Common myeloid progenitor, CD34-positive (primary cell): ENCODE measurements at regions of chr10 and their contacts with region 1.

Region 1: DNA sequence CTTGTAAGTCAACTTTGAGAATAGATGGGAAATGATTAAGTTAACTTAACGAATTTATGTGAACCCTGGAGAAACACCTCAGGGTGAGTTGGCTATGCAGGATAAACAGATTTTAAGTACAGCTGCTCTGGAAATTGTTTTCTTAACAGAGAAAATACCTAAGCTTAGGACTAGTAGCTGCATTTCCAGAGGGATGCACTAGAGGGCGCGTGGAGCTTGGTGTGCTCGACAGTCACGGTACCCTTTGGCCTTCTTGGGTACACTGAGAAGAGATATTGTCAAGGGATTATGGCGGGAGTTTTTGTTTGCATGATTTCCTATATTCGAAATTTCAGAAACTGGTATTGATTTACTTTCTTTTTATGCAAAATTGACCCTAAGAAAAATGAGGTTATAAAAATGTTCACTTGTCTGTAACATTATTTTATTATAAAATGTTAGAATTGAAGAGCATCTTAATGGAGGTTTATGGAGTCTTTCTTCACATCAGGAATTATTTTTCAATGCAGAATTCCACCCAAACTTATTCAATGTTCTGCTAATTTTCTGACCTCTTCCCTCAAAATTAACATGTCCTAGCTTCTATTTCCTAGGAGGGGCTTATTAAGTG is 58.4 kb upstream of the MYO3A start:
- DNase-seq: peak; percentile 48 to 76 (median 66)
- H3K4me3 ChIP-seq: no peak overlapping the region
- H3K27ac ChIP-seq: no peak overlapping the region
- H3K4me1 ChIP-seq: no peaks in the 10 kb centered on the region
- H3K27me3 ChIP-seq: peaks cover 0 to 8% (median 1%) of the 10 kb centered on the region in 5 experiments

Region 2: GRCh38 chr10:25858076-25858475 is 17.6 kb before region 1 on chr10:
- CTCF ChIA-PET with region 1: interaction called, 11 read pairs
- POLR2A ChIA-PET with region 1: no interaction called
- DNase-seq: no peak
- H3K4me3 ChIP-seq: no peak overlapping the region
- H3K27ac ChIP-seq: no peak overlapping the region
- H3K4me1 ChIP-seq: no peaks in the 10 kb centered on the region
- H3K27me3 ChIP-seq: peaks cover 0 to 5% (median 0%) of the 10 kb centered on the region in 5 experiments

Region 3: DNA sequence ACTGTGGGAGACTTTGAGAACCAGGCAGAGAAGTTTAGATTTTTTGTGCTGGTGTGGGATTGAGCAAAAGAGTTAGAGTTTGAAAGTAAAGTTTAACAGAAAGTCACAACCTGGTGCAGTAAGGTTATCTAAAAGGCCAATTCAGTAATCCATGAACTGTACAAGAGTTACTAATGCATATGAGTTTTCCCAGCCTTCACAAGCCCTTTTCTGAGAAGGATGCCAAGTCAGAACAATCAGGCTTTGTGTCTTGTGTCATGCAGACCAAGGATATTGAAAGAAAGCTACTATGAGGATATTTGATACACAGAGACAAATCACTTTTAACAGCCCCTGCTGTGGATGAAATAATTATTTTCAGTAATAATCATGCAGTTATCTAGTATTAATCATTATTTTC is 10.4 kb before region 1 on chr10:
- CTCF ChIA-PET with region 1: interaction called, 11 read pairs
- POLR2A ChIA-PET with region 1: no interaction called
- DNase-seq: no peak
- H3K4me3 ChIP-seq: no peak overlapping the region
- H3K27ac ChIP-seq: no peak overlapping the region
- H3K4me1 ChIP-seq: no peaks in the 10 kb centered on the region
- H3K27me3 ChIP-seq: no peaks in the 10 kb centered on the region

Region 4: DNA sequence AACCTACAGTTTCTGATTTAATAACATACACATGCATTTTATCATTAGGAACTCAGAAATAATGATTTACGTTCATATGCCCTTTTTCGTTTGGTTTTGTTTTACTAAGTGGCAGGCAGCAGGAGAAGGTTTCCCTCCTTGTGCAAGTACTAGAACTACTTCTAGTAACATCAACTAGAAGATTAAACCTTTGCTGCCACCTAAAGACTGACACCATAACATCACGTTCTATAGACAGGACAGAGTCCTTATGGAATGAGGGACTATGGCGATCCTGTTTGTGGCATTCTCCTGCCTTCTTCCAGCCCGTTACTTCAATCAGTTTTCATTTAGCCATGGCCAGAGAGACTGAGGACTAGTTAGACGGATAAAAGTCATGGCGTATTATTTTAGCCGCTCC is 394.1 kb after region 1 on chr10:
- CTCF ChIA-PET with region 1: interaction called, 17 read pairs
- POLR2A ChIA-PET with region 1: no interaction called
- DNase-seq: peak; percentile 27 to 58 (median 44)
- H3K4me3 ChIP-seq: no peak overlapping the region
- H3K27ac ChIP-seq: no peak overlapping the region
- H3K4me1 ChIP-seq: no peaks in the 10 kb centered on the region
- H3K27me3 ChIP-seq: peaks cover 0 to 32% (median 6%) of the 10 kb centered on the region in 5 experiments

Region 5: GRCh38 chr10:26556748-26557640 is 681.3 kb after region 1 on chr10:
- CTCF ChIA-PET with region 1: interaction called, 12 read pairs
- POLR2A ChIA-PET with region 1: interaction called, 3 read pairs
- DNase-seq: peak; percentile 48 to 72 (median 68)
- H3K4me3 ChIP-seq: no peak overlapping the region
- H3K27ac ChIP-seq: no peak overlapping the region
- H3K4me1 ChIP-seq: peaks cover 0 to 12% (median 4%) of the 10 kb centered on the region in 4 experiments
- H3K27me3 ChIP-seq: no peaks in the 10 kb centered on the region